Activated T-helper 2 cell treated with anti-CD3 and anti-CD28 coated beads, Interferon-gamma antibody, Interleukin-2, Interleukin-4, amounts not matched to agents 10 μg/mL and 5 μg/mL and 100 μg/mL, durations not matched to agents 14 hours and 24 hours and 36 hours (primary cell): ENCODE measurements at regions of chr2 and their contacts with region 1.

Region 1: DNA sequence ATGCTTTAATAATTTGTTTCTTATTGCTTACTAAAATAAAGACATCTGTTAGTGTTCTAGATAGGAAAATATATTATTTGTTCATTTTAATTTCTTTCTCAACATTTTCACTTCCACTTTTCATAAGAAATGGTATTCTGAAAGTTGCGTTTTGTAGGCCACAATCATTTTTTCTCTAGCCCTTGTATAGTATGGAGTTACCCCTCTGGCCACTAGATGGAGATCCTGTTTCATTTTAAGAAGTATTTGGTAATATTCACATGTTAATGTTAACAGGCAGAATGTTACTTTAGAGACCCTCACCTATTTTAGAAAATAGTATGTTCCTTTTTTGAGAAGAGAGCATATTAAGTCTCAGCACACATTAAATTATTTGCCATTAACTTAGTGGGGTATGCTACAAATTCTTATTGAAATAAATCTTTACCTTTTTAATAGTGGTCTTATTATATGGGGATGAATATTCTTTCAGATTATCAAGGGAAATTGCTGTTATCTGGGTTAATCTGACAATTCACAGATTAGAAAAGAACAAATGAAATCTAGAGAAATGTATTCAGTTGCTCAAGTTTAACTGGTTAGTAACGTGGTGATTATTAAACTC is 73.9 kb upstream of the TTC27 start:
- DNase-seq: no peak
- H3K4me3 Mint-ChIP-seq: no peak overlapping the region
- H3K27ac Mint-ChIP-seq: no peak overlapping the region
- H3K4me1 Mint-ChIP-seq: no peaks in the 10 kb centered on the region
- H3K27me3 Mint-ChIP-seq: no peaks in the 10 kb centered on the region

Region 2: GRCh38 chr2:32591669-32592463 is 37.9 kb after region 1 on chr2:
- intact Hi-C with region 1: loop called (anchors 5 kb)
- DNase-seq: no peak
- H3K4me3 Mint-ChIP-seq: peak overlapping the region; percentile 49
- H3K27ac Mint-ChIP-seq: peak overlapping the region; percentile 88
- H3K4me1 Mint-ChIP-seq: peaks cover 44% of the 10 kb centered on the region
- H3K27me3 Mint-ChIP-seq: no peaks in the 10 kb centered on the region

Region 3: DNA sequence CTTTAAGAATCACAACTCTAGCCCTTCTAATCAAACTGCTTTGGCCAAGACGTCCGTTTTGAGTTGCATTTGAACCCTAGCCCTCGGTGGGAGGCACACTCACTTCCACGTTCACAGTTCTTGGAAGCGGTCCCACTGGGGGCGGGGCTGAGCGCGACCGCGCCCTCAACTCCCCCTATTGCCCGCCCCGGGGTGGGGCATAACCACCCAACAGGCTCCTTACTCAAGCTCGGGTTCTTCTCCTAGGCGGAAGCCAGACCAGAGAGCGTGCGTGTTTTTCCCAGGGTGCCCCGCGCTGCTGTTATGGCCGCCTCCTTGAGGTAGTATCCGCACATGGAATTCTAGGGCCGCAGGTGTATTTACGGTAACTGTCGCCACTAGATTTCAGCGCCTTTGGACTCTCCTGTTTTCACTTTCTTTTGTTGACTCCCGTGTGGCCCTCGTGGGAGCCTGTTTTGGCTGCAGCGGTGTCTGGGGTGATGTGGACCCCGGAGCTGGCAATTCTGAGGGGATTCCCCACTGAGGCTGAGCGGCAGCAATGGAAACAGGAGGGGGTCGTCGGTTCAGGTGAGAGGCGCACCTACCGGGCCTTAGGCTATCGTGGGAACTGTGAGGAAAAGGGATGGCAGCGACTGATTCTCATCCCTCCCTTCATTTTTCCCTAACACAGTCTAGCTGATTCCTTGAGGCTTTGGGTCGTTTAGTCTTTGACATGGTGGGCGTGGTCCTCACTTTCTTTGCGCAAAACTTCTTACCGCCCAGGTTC is 74.1 kb after region 1 on chr2 and contains the start of gene TTC27:
- intact Hi-C with region 1: loop called (anchors 1 kb)
- DNase-seq: peak; percentile 93
- H3K4me3 Mint-ChIP-seq: peak within 1 kb of the TSS; percentile 95
- H3K27ac Mint-ChIP-seq: peak within 1 kb of the TSS; percentile 95
- H3K4me1 Mint-ChIP-seq: peaks cover 27% of the 10 kb centered on the region
- H3K27me3 Mint-ChIP-seq: no peaks in the 10 kb centered on the region
- total RNA-seq, gene TTC27: 38.8 and 44.9 TPM in 2 replicates

Region 4: GRCh38 chr2:33022989-33023727 is 469.2 kb after region 1 on chr2:
- intact Hi-C with region 1: loop called (anchors 10 kb)
- DNase-seq: no peak
- H3K4me3 Mint-ChIP-seq: no peak overlapping the region
- H3K27ac Mint-ChIP-seq: no peak overlapping the region
- H3K4me1 Mint-ChIP-seq: peaks cover 6% of the 10 kb centered on the region
- H3K27me3 Mint-ChIP-seq: peaks cover 30% of the 10 kb centered on the region

Region 5: DNA sequence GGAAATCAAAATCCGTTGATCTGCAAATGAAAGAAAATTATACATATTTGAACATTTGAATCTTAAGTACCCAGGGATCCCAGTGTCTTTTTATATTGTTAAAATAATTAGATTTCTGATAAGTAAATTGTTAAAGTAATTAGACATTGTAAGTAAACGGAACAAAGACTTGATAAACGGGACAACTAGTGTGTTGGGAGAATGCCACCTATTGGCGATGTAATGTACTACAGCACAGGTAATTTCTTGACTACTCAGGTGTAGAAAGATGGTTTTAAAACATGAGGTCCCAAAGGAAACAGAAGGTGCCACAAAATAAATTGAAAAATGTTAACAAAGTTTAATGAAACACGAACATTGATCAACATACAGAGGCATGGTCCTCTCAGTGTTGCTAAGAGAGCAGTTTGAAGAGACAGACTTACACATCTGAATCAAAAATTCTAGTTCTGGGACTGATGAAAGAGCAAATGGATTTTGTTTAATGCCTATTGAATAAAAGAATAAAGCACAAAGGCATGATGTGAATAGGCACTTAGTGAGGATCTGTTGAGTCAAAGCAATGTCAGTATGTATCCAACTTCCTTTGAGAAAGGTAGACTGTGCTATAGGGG is 819.1 kb after region 1 on chr2:
- intact Hi-C with region 1: loop called (anchors 10 kb)
- DNase-seq: no peak
- H3K4me3 Mint-ChIP-seq: no peak overlapping the region
- H3K27ac Mint-ChIP-seq: no peak overlapping the region
- H3K4me1 Mint-ChIP-seq: no peaks in the 10 kb centered on the region
- H3K27me3 Mint-ChIP-seq: peaks cover 8% of the 10 kb centered on the region